ENCODE measurements at regions of chr10 and their contacts with region 1.

Region 1: GRCh38 chr10:30456266-30456665 is 22.3 kb downstream of the MAP3K8 start:
- DNase-seq: peak in 6 of 9 experiments; percentile 26 to 65 (median 46)
- ATAC-seq: peak; percentile 70
- H3K4me3 ChIP-seq: peak overlapping the region in 1 of 2 experiments; percentile 18
- H3K4me3 Mint-ChIP-seq: peak overlapping the region; percentile 72
- H3K27ac ChIP-seq: peak overlapping the region in 1 of 2 experiments; percentile 65
- H3K27ac Mint-ChIP-seq: peak overlapping the region; percentile 85
- H3K4me1 ChIP-seq: peaks cover 25% of the 10 kb centered on the region
- H3K4me1 Mint-ChIP-seq: peaks cover 31% of the 10 kb centered on the region
- H3K27me3 ChIP-seq: no peaks in the 10 kb centered on the region
- H3K27me3 Mint-ChIP-seq: no peaks in the 10 kb centered on the region
- CTCF ChIP-seq: no peak

Region 2: GRCh38 chr10:30345611-30346010 is 110.7 kb before region 1 on chr10:
- CTCF ChIA-PET with region 1: no interaction called
- POLR2A ChIA-PET with region 1: no interaction called
- intact Hi-C with region 1: no loop called
- DNase-seq: no peak
- ATAC-seq: no peak
- H3K4me3 ChIP-seq: no peak overlapping the region
- H3K4me3 Mint-ChIP-seq: no peak overlapping the region
- H3K27ac ChIP-seq: no peak overlapping the region
- H3K27ac Mint-ChIP-seq: no peak overlapping the region
- H3K4me1 ChIP-seq: peaks cover 41% of the 10 kb centered on the region
- H3K4me1 Mint-ChIP-seq: peaks cover 60% of the 10 kb centered on the region
- H3K27me3 ChIP-seq: no peaks in the 10 kb centered on the region
- H3K27me3 Mint-ChIP-seq: no peaks in the 10 kb centered on the region
- CTCF ChIP-seq: no peak

Region 3: GRCh38 chr10:30359373-30360206 is 96.7 kb before region 1 on chr10:
- CTCF ChIA-PET with region 1: no interaction called
- POLR2A ChIA-PET with region 1: no interaction called
- intact Hi-C with region 1: no loop called
- DNase-seq: peak; percentile 30 to 76 (median 59)
- ATAC-seq: peak; percentile 88
- H3K4me3 ChIP-seq: no peak overlapping the region
- H3K4me3 Mint-ChIP-seq: no peak overlapping the region
- H3K27ac ChIP-seq: no peak overlapping the region
- H3K27ac Mint-ChIP-seq: no peak overlapping the region
- H3K4me1 ChIP-seq: peaks cover 3% of the 10 kb centered on the region
- H3K4me1 Mint-ChIP-seq: no peaks in the 10 kb centered on the region
- H3K27me3 ChIP-seq: peaks cover 0 to 4% of the 10 kb centered on the region in 2 experiments
- H3K27me3 Mint-ChIP-seq: peaks cover 3% of the 10 kb centered on the region
- CTCF ChIP-seq: peak; percentile 60

Region 4: DNA sequence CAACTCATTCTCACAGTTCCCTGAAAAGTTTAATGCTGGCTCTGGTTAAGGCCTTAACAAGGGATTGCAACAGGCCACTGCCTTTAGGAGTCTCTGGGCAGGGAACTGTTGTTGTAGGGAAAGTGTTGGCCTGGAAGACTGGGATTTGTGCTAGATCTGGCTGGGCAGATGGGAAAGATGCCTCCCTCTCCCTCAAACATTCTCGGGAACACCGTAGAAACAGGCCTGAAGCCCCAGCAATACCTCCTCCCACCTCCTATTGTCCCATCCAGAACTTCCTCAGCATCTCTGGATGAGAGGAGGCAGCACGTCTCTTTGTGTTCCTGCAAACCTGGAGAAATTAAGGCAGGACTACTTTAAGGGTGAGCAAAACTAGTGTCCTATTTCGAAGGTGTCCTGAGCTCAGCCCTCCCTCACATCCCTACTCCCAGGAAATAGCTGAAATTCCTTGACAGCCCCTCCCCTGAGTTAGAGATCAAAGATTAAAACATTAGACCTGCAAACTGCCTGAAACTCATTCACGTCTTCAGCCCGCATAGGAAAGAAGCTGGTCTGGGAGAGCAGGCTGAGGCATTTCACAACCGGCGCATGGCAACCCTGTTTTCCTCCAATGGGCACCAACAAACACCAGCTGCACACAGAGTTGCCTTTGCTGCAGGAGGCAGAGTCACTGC is 33.1 kb before region 1 on chr10:
- CTCF ChIA-PET with region 1: no interaction called
- POLR2A ChIA-PET with region 1: interaction called, 4 read pairs
- intact Hi-C with region 1: loop called in 1 of 2 experiments (anchors 5 kb)
- DNase-seq: no peak
- ATAC-seq: no peak
- H3K4me3 ChIP-seq: no peak overlapping the region
- H3K4me3 Mint-ChIP-seq: no peak overlapping the region
- H3K27ac ChIP-seq: no peak overlapping the region
- H3K27ac Mint-ChIP-seq: no peak overlapping the region
- H3K4me1 ChIP-seq: peaks cover 10% of the 10 kb centered on the region
- H3K4me1 Mint-ChIP-seq: peaks cover 27% of the 10 kb centered on the region
- H3K27me3 ChIP-seq: no peaks in the 10 kb centered on the region
- H3K27me3 Mint-ChIP-seq: no peaks in the 10 kb centered on the region
- CTCF ChIP-seq: no peak

Region 5: GRCh38 chr10:30433730-30434272 is 22.5 kb before region 1 on chr10 and contains the start of gene MAP3K8:
- CTCF ChIA-PET with region 1: no interaction called
- POLR2A ChIA-PET with region 1: interaction called, 11 read pairs
- intact Hi-C with region 1: loop called in 1 of 2 experiments (anchors 2 kb)
- DNase-seq: peak; percentile 62 to 95 (median 81)
- ATAC-seq: peak; percentile 76
- H3K4me3 ChIP-seq: peak within 1 kb of the TSS; percentile 84 to 92
- H3K4me3 Mint-ChIP-seq: peak within 1 kb of the TSS; percentile 91
- H3K27ac ChIP-seq: peak within 1 kb of the TSS; percentile 50 to 90
- H3K27ac Mint-ChIP-seq: peak within 1 kb of the TSS; percentile 87
- H3K4me1 ChIP-seq: peaks cover 25% of the 10 kb centered on the region
- H3K4me1 Mint-ChIP-seq: peaks cover 44% of the 10 kb centered on the region
- H3K27me3 ChIP-seq: peaks cover 0 to 3% of the 10 kb centered on the region in 2 experiments
- H3K27me3 Mint-ChIP-seq: no peaks in the 10 kb centered on the region
- CTCF ChIP-seq: no peak
- total RNA-seq, gene MAP3K8: 42.4 to 48.6 TPM

Region 6: GRCh38 chr10:30999070-30999712 is 542.9 kb after region 1 on chr10:
- CTCF ChIA-PET with region 1: no interaction called
- POLR2A ChIA-PET with region 1: no interaction called
- intact Hi-C with region 1: no loop called
- DNase-seq: peak in 1 of 9 experiments; percentile 50
- ATAC-seq: no peak
- H3K4me3 ChIP-seq: peak overlapping the region in 1 of 2 experiments; percentile 42
- H3K4me3 Mint-ChIP-seq: peak overlapping the region; percentile 61
- H3K27ac ChIP-seq: peak overlapping the region; percentile 9 to 59
- H3K27ac Mint-ChIP-seq: peak overlapping the region; percentile 24
- H3K4me1 ChIP-seq: no peaks in the 10 kb centered on the region
- H3K4me1 Mint-ChIP-seq: peaks cover 29% of the 10 kb centered on the region
- H3K27me3 ChIP-seq: no peaks in the 10 kb centered on the region
- H3K27me3 Mint-ChIP-seq: no peaks in the 10 kb centered on the region
- CTCF ChIP-seq: no peak

Measured in CD8-positive, alpha-beta T cell (primary cell).